ENCODE measurements at regions of chr3 and their contacts with region 1.

Region 1: GRCh38 chr3:143885780-143886427 is 37.6 kb upstream of the SLC9A9 start:
- DNase-seq: peak; percentile 61
- ATAC-seq: peak; percentile 80
- H3K4me3 ChIP-seq: no peak overlapping the region
- H3K4me3 Mint-ChIP-seq: no peak overlapping the region
- H3K27ac ChIP-seq: no peak overlapping the region
- H3K27ac Mint-ChIP-seq: no peak overlapping the region
- H3K4me1 ChIP-seq: no peaks in the 10 kb centered on the region
- H3K4me1 Mint-ChIP-seq: no peaks in the 10 kb centered on the region
- H3K27me3 ChIP-seq: peaks cover 0 to 2% (median 0%) of the 10 kb centered on the region in 4 experiments
- H3K27me3 Mint-ChIP-seq: no peaks in the 10 kb centered on the region
- CTCF ChIP-seq: peak; percentile 88

Region 2: GRCh38 chr3:142680710-142681109 is 1205.2 kb before region 1 on chr3:
- CTCF ChIA-PET with region 1: no interaction called
- POLR2A ChIA-PET with region 1: no interaction called
- intact Hi-C with region 1: no loop called
- DNase-seq: no peak
- ATAC-seq: no peak
- H3K4me3 ChIP-seq: no peak overlapping the region
- H3K4me3 Mint-ChIP-seq: no peak overlapping the region
- H3K27ac ChIP-seq: no peak overlapping the region
- H3K27ac Mint-ChIP-seq: no peak overlapping the region
- H3K4me1 ChIP-seq: no peaks in the 10 kb centered on the region
- H3K4me1 Mint-ChIP-seq: no peaks in the 10 kb centered on the region
- H3K27me3 ChIP-seq: no peaks in the 10 kb centered on the region
- H3K27me3 Mint-ChIP-seq: no peaks in the 10 kb centered on the region
- CTCF ChIP-seq: no peak

Region 3: DNA sequence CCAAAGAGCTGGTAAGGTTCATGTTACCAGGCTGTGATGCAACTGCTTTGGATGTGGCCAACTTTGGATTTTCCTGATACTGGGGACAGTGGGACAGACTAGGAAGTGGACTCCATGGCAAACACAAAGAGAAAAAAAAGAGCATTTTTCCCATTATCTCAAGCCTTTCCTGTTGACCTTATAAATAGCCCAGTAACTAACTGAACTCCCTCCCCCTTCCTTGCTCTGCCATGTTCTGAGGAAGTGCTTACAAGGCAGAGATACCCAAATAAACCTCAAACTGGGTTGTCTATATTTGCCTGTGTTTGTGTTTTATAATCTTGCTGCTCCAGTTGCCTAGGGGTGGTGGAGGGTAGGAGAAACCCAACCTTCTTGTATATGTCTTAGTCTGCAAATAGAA is 10.4 kb before region 1 on chr3:
- CTCF ChIA-PET with region 1: interaction called, 13 read pairs
- POLR2A ChIA-PET with region 1: no interaction called
- intact Hi-C with region 1: no loop called
- DNase-seq: no peak
- ATAC-seq: no peak
- H3K4me3 ChIP-seq: no peak overlapping the region
- H3K4me3 Mint-ChIP-seq: no peak overlapping the region
- H3K27ac ChIP-seq: no peak overlapping the region
- H3K27ac Mint-ChIP-seq: no peak overlapping the region
- H3K4me1 ChIP-seq: no peaks in the 10 kb centered on the region
- H3K4me1 Mint-ChIP-seq: peaks cover 3% of the 10 kb centered on the region
- H3K27me3 ChIP-seq: no peaks in the 10 kb centered on the region
- H3K27me3 Mint-ChIP-seq: peaks cover 4% of the 10 kb centered on the region
- CTCF ChIP-seq: no peak

Measured in B cell (primary cell).